OCI-LY7 (cell line): ENCODE measurements at regions of chr4 and their contacts with region 1.

Region 1: DNA sequence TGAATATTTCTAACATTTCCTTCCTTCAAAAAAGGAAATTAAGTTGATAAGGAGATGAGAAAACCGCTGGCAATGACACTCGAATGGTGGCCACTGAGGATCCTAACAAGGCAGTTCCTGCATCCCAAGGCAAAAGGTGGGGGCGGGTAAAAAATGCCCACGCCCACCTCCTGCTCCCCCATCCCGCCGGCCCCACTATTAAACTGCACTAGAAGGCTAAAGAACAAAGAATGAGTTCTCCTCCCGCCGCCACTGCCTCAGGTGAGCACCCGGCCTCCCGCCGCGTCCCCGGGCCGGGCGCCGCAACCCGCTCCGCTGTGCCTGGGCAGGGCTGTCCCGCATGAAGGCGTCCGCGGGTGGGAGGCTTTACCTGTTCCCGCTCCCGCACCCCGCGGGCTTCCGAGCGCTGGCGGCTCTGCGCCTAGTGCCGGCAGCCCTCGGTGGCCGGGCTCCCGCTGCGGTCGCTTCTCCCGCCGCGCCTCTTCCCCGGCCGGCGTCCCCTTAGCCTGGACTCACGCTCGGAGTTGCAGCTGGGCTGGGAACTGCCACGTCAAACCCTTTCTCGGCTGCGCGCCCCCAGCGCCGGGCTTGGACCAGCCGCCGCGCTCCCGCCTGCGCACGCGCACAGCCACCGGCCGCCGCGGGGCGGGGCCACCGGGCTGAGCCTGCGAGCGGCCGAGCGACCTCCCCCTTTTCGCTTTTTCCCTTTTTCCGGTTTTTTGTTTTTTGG is at the start of gene SEC24D:
- DNase-seq: peak; percentile 87
- H3K4me3 ChIP-seq: peak within 1 kb of the TSS; percentile 97
- H3K27ac ChIP-seq: peak within 1 kb of the TSS; percentile 67
- H3K4me1 ChIP-seq: peaks cover 39% of the 10 kb centered on the region
- CTCF ChIP-seq: no peak; the same call in 1 of the 2 replicates
- total RNA-seq, gene SEC24D: 10.7 and 15.1 TPM in 2 replicates

Region 2: DNA sequence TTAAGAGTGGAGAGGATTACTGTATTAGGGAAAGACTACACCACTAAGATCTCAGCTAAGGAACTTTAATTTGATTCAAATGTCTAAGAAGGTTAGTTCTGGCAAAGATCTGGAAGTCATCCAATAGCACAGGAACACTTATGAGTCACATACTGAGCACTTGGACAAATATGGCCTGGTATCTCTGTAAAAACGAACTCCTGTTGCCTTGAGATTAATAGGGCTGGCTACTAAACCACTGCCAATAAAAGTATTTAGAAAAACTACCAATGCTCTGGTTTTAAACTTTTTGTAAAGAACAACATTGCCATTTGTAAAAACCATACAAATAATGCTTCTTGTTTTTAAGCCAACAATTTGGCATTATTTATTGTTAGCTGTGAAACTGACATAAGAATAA is 70.3 kb before region 1 on chr4:
- CTCF ChIA-PET with region 1: no interaction called
- POLR2A ChIA-PET with region 1: interaction called, 8 read pairs
- intact Hi-C with region 1: loop called (anchors 1 kb)
- DNase-seq: no peak
- H3K4me3 ChIP-seq: no peak overlapping the region
- H3K27ac ChIP-seq: no peak overlapping the region
- H3K4me1 ChIP-seq: peaks cover 37% of the 10 kb centered on the region
- CTCF ChIP-seq: no peak

Region 3: DNA sequence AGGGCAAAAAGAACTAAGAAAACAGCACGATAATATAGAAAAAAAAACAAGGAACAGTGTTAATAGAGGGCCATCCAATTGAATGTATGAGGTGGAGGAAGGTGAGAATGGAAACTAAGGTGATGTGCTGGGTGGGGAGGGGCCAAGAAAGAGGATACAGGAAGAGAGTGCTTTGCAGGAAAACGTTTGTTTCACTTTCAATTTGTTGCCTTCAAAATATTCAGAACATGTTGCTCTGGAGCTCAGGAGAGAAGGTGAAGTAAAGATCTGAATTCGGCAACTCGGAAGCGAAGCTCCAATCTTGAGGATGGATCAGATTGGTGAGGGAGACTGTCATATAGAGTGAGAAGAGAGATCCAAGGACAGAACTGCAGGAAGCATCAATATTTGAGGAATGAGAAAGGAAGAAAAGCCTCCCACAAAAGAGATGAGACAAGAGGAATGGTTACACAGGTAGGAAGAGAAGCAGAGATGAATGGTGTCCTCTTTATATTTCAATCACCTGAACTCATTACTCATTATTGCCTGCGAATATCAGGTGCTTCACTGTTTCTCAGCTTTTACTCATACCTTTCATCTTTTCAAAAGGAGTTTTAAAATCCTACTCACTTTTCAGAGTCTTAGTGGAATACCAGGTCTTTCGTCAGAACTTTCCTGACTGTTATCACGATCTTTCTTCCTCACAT is 14.9 kb after region 1 on chr4:
- CTCF ChIA-PET with region 1: interaction called, 6 read pairs
- POLR2A ChIA-PET with region 1: interaction called, 59 read pairs
- intact Hi-C with region 1: no loop called
- DNase-seq: peak; percentile 59
- H3K4me3 ChIP-seq: peak overlapping the region; percentile 63
- H3K27ac ChIP-seq: no peak overlapping the region
- H3K4me1 ChIP-seq: peaks cover 18% of the 10 kb centered on the region
- CTCF ChIP-seq: no peak

Region 4: GRCh38 chr4:118911238-118911703 is 75.5 kb after region 1 on chr4:
- CTCF ChIA-PET with region 1: no interaction called
- POLR2A ChIA-PET with region 1: no interaction called
- intact Hi-C with region 1: no loop called
- DNase-seq: no peak
- H3K4me3 ChIP-seq: no peak overlapping the region
- H3K27ac ChIP-seq: no peak overlapping the region
- H3K4me1 ChIP-seq: no peaks in the 10 kb centered on the region
- CTCF ChIP-seq: no peak